GM12878 (cell line): ENCODE measurements at regions of chr15 and their contacts with region 1.

Region 1: GRCh38 chr15:33201491-33202231 is 7.1 kb upstream of the FMN1 start:
- DNase-seq: peak; percentile 68
- ATAC-seq: peak; percentile 91
- H3K4me3 ChIP-seq: no peak overlapping the region
- H3K27ac ChIP-seq: 0 out of 2 replicates have a peak overlapping the region, but pooled peaks have one; percentile 9
- H3K4me1 ChIP-seq: peaks cover 10% of the 10 kb centered on the region
- H3K27me3 ChIP-seq: peaks cover 0 to 6% of the 10 kb centered on the region in 2 experiments; a peak in 2 of 4 replicates
- CTCF ChIP-seq: peak in 2 of 3 experiments; percentile 14 to 33; a peak in 3 of 6 replicates
- EP300 ChIP-seq: peak in 1 of 2 experiments; percentile 39; a peak in 1 of 4 replicates
- POLR2A ChIP-seq: no peak
- RAD21 ChIP-seq: no peak

Region 2: DNA sequence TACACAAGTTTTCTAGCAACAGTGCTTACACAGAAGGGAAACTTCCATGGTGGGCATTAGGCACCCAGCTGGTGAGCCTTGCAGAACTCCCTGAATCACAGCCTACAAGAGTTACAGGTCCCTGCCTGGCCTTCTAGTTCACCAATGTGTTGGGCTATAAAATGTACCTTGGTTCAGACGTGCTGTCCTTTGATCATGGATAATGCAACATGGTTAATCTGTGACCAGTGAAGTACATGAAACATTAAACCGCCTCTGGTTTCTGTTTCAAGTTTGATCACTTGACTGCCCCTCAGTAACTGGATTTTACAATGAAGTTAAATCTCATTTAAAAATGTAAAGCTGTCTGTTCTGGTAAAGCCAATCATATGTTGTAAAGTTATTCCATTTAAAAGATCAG is 59.0 kb before region 1 on chr15:
- CTCF ChIA-PET with region 1: interaction called, 3 read pairs
- POLR2A ChIA-PET with region 1: no interaction called
- RAD21 ChIA-PET with region 1: no interaction called
- SMC1A ChIA-PET with region 1: no interaction called
- in situ Hi-C with region 1: no loop called
- intact Hi-C with region 1: loop called (anchors 5 kb)
- DNase-seq: no peak
- ATAC-seq: peak; percentile 81
- H3K4me3 ChIP-seq: no peak overlapping the region
- H3K27ac ChIP-seq: no peak overlapping the region
- H3K4me1 ChIP-seq: no peaks in the 10 kb centered on the region
- H3K27me3 ChIP-seq: peaks cover 0 to 3% of the 10 kb centered on the region in 2 experiments; a peak in 1 of 4 replicates
- CTCF ChIP-seq: no peak
- EP300 ChIP-seq: no peak
- POLR2A ChIP-seq: no peak
- RAD21 ChIP-seq: no peak

Region 3: DNA sequence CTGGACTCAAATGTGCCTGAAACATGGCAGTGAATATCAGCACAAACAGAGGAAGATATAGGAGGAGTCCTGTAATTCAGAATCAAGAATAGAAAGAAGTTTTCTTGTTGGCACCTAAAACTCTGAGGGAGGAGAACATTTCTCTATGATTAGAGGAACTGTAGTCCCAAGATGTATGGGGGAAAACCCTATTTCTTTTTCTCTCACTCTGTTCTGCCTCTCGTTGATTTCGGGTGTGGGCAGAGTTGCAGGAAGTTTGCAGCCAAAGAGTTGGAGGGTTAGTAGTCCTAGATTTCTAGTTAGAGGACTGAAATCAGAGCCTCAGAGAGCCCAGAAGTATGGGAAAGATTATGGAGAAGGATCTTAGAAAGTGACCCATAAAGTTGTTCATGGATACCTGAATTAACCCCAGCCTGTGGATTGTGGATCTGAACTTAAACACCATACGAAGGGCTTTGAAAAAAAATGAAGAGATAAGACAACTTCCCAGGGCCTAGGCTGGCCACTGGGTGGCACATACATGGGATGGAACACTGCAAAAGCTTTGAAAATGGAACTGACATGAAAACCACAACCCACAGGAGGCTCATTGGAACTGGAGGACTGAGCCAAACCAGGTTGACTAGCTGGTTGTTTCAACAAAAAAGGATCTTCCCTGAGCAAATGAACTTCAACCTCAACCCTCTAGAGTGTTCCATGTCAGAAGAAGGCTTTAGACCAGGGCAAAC is 41.8 kb before region 1 on chr15:
- CTCF ChIA-PET with region 1: no interaction called
- POLR2A ChIA-PET with region 1: no interaction called
- RAD21 ChIA-PET with region 1: no interaction called
- SMC1A ChIA-PET with region 1: interaction called, 3 read pairs
- in situ Hi-C with region 1: no loop called
- intact Hi-C with region 1: loop called (anchors 5 kb)
- DNase-seq: no peak
- ATAC-seq: peak; percentile 14; the same call in 2 of the 3 replicates
- H3K4me3 ChIP-seq: no peak overlapping the region
- H3K27ac ChIP-seq: no peak overlapping the region
- H3K4me1 ChIP-seq: peaks cover 12% of the 10 kb centered on the region
- H3K27me3 ChIP-seq: no peaks in the 10 kb centered on the region; a peak in 1 of 4 replicates
- CTCF ChIP-seq: 0 out of 6 replicates have a peak, but pooled peaks of 1 of the 3 experiments have one; percentile 5
- EP300 ChIP-seq: no peak
- POLR2A ChIP-seq: no peak
- RAD21 ChIP-seq: no peak

Region 4: DNA sequence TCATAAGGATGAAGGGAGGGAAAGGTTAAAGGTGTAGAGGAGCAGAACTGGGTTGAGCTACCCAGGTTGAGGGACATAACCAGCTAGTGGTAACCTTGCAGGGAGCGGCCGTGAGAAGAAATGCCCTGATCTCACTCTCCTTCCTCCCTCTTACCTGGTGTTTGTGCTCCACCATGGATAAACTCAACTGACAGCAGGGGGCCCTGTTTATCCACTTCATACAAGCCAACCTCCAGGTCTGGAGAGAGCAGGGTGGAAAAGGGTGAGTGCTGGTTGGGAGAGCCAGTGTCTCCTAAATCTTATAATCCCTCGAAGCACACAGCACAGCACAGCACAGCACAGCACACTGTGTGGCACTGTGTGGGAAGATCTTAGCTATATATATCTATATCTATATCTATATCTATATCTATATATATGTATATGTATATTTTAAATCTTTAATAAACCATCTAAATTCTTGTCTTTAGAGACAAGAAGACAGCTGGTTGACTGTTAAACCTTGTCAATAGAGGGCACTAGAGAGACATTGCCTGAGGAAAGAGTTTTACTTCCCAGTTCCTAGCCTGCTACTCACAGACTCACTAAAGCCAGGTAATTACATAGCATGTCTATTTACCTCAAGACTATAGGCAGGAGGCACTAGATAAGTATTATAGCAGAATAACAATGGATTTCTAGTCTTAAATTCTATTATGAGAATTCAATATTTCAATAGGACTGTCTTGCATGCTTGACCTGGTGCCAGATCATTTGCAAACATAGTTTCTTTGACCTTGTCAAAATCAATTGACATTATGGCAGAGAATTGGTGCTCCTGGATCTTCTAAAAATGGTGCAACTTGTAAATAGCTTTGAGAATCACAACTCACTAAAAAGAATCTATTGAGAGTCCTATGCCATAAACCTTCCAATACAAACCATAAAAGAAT is 14.5 kb after region 1 on chr15:
- CTCF ChIA-PET with region 1: interaction called, 23 read pairs
- POLR2A ChIA-PET with region 1: interaction called, 4 read pairs
- RAD21 ChIA-PET with region 1: interaction called, 4 read pairs
- SMC1A ChIA-PET with region 1: interaction called, 3 read pairs
- in situ Hi-C with region 1: no loop called
- intact Hi-C with region 1: no loop called
- DNase-seq: no peak
- ATAC-seq: peak; percentile 65
- H3K4me3 ChIP-seq: no peak overlapping the region
- H3K27ac ChIP-seq: no peak overlapping the region
- H3K4me1 ChIP-seq: no peaks in the 10 kb centered on the region
- H3K27me3 ChIP-seq: no peaks in the 10 kb centered on the region
- CTCF ChIP-seq: peak; percentile 53 to 67 (median 60)
- EP300 ChIP-seq: no peak
- POLR2A ChIP-seq: no peak
- RAD21 ChIP-seq: peak; percentile 42